Motor neuron (in vitro differentiated cells): ENCODE measurements at regions of chr14 and their contacts with region 1.

Region 1: GRCh38 chr14:73173092-73173735 is 36.9 kb downstream of the PSEN1 start:
- ATAC-seq: peak in 3 of 8 experiments; percentile 49 to 63 (median 53)
- H3K4me3 ChIP-seq: no peak overlapping the region
- H3K27ac ChIP-seq: no peak overlapping the region
- H3K4me1 ChIP-seq: peaks cover 0 to 4% of the 10 kb centered on the region in 2 donors

Region 2: GRCh38 chr14:73491256-73492042 is 318.2 kb after region 1 on chr14:
- in situ Hi-C with region 1: loop called in 1 of 9 experiments (anchors 25 kb)
- ATAC-seq: peak; percentile 48 to 75 (median 68)
- H3K4me3 ChIP-seq: peak overlapping the region; percentile 53 to 68 (median 61)
- H3K27ac ChIP-seq: peak overlapping the region; percentile 48 to 78
- H3K4me1 ChIP-seq: peaks cover 19 to 21% of the 10 kb centered on the region in 2 donors